GM12878 (cell line): ENCODE measurements at regions of chr1 and their contacts with region 1.

Region 1: DNA sequence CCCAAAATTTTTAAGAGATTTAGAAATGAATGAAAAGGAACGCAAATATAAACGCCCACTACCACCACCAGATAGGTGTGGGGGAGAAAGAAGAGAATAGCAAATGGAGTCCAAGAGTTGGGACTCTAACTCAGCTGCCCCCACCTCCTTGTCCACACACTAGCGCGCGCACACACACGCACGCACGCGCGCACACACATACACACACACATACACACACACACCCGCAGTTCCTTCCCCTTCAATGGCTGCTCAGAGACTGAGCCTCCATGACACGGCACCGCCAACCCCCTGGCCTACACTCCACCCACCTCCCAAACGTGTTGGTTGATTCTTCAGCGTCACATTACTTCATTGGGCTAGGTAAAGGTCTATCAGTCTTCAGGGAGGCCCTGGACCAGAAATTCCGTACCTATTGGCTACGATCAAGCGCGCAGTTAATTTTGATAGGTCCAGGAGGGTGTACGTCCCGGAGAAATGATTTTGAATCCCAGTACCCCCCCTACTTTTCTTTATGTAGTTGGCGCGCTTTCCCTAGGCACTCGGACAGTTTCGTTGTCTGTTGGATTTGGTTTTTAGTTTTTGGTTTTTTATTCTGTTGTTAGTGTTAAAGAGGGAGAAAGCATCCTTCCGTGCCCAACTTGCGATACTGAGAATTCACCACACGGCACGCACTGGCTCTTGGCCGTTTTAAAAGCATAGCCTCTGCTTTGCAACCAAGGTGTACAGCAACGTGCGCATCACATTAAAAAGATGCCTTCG is at the start of gene ANP32E:
- DNase-seq: peak; percentile 99
- ATAC-seq: peak; percentile 87
- H3K4me3 ChIP-seq: peak within 1 kb of the TSS; percentile 87
- H3K27ac ChIP-seq: peak within 1 kb of the TSS; percentile 99
- H3K4me1 ChIP-seq: no peaks in the 10 kb centered on the region
- H3K27me3 ChIP-seq: no peaks in the 10 kb centered on the region
- CTCF ChIP-seq: no peak; a peak in 2 of 6 replicates
- EP300 ChIP-seq: 0 out of 4 replicates have a peak, but pooled peaks of 1 of the 2 experiments have one; percentile 24
- POLR2A ChIP-seq: peak; percentile 98
- RAD21 ChIP-seq: no peak
- polyA plus RNA-seq, gene ANP32E: 142 to 250 TPM

Region 2: GRCh38 chr1:150213170-150214098 is 22.6 kb before region 1 on chr1:
- CTCF ChIA-PET with region 1: interaction called, 4 read pairs
- POLR2A ChIA-PET with region 1: interaction called, 5 read pairs
- RAD21 ChIA-PET with region 1: no interaction called
- SMC1A ChIA-PET with region 1: interaction called, 10 read pairs
- in situ Hi-C with region 1: no loop called
- intact Hi-C with region 1: no loop called
- DNase-seq: peak; percentile 79
- ATAC-seq: peak; percentile 100
- H3K4me3 ChIP-seq: peak overlapping the region; percentile 40; the same call in 1 of the 2 replicates
- H3K27ac ChIP-seq: peak overlapping the region; percentile 52; the same call in 1 of the 2 replicates
- H3K4me1 ChIP-seq: no peaks in the 10 kb centered on the region
- H3K27me3 ChIP-seq: no peaks in the 10 kb centered on the region
- CTCF ChIP-seq: peak; percentile 16 to 27 (median 22); a peak in 3 of 6 replicates
- EP300 ChIP-seq: no peak
- POLR2A ChIP-seq: no peak; the same call in 1 of the 2 replicates
- RAD21 ChIP-seq: 0 out of 2 replicates have a peak, but pooled peaks have one; percentile 21

Region 3: GRCh38 chr1:150268705-150269403 is 32.8 kb after region 1 on chr1 and contains the start of gene APH1A:
- CTCF ChIA-PET with region 1: no interaction called
- POLR2A ChIA-PET with region 1: interaction called, 3 read pairs
- RAD21 ChIA-PET with region 1: no interaction called
- SMC1A ChIA-PET with region 1: interaction called, 5 read pairs
- in situ Hi-C with region 1: no loop called
- intact Hi-C with region 1: loop called (anchors 5 kb)
- DNase-seq: peak; percentile 78
- ATAC-seq: peak; percentile 99
- H3K4me3 ChIP-seq: peak within 1 kb of the TSS; percentile 97
- H3K27ac ChIP-seq: peak within 1 kb of the TSS; percentile 90
- H3K4me1 ChIP-seq: peaks cover 12% of the 10 kb centered on the region
- H3K27me3 ChIP-seq: no peaks in the 10 kb centered on the region
- CTCF ChIP-seq: no peak
- EP300 ChIP-seq: no peak
- POLR2A ChIP-seq: peak; percentile 84
- RAD21 ChIP-seq: no peak
- polyA plus RNA-seq, gene APH1A: 6.7 to 13.5 TPM

Region 4: DNA sequence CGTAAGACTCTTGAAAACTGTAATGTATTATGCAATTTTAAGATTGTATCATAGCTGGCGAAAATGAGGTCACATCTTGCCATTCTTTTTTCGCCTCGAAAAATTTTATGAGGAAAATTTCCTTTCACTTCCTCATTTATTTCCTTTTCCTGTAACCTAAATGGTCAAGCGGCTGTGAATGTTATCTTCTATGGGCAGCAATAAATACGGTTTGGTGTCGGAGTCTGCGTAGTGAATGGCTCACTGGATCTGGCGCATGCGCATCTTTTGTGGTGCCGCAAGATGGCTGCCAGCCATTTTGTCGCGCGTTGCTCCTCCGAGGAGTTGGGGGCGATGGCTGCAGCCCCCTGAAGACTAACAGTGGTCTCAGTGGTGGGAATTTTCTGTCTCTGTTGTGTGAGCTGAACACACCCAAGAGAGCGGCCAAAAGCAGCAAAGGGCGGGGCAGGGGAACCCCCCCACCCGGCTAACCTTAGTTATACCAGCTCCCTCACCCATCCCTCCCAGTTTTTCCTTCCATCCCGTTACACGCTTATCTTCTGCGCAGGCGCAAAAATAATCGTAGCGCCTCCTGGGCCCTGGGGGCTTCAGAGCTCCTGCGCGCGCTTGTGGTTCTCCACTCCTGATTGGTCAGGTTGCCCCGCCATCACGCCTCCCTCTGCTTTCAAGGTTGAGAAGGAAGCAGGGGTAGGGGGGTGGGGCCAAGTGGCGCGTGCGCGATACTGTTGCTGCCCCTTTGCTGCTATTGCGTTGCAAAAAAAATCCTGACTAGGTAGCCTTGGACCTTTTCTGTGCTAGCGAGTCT is 127.6 kb after region 1 on chr1 and contains the start of gene RPRD2:
- CTCF ChIA-PET with region 1: no interaction called
- POLR2A ChIA-PET with region 1: no interaction called
- RAD21 ChIA-PET with region 1: interaction called, 3 read pairs
- SMC1A ChIA-PET with region 1: no interaction called
- in situ Hi-C with region 1: no loop called
- intact Hi-C with region 1: loop called (anchors 10 kb)
- DNase-seq: peak; percentile 97
- ATAC-seq: peak; percentile 95
- H3K4me3 ChIP-seq: peak within 1 kb of the TSS; percentile 69
- H3K27ac ChIP-seq: peak within 1 kb of the TSS; percentile 94
- H3K4me1 ChIP-seq: peaks cover 5% of the 10 kb centered on the region
- H3K27me3 ChIP-seq: no peaks in the 10 kb centered on the region
- CTCF ChIP-seq: no peak
- EP300 ChIP-seq: no peak
- POLR2A ChIP-seq: peak; percentile 92
- RAD21 ChIP-seq: no peak
- polyA plus RNA-seq, gene RPRD2: 1.9 to 4.0 TPM